ENCODE measurements at regions of chr9 and their contacts with region 1.

Region 1: GRCh38 chr9:129270903-129271431 is 92.9 kb upstream of the IER5L start:
- DNase-seq: peak; percentile 39
- H3K4me3 Mint-ChIP-seq: no peak overlapping the region
- H3K27ac Mint-ChIP-seq: no peak overlapping the region
- H3K4me1 Mint-ChIP-seq: peaks cover 22% of the 10 kb centered on the region
- H3K27me3 Mint-ChIP-seq: no peaks in the 10 kb centered on the region

Region 2: DNA sequence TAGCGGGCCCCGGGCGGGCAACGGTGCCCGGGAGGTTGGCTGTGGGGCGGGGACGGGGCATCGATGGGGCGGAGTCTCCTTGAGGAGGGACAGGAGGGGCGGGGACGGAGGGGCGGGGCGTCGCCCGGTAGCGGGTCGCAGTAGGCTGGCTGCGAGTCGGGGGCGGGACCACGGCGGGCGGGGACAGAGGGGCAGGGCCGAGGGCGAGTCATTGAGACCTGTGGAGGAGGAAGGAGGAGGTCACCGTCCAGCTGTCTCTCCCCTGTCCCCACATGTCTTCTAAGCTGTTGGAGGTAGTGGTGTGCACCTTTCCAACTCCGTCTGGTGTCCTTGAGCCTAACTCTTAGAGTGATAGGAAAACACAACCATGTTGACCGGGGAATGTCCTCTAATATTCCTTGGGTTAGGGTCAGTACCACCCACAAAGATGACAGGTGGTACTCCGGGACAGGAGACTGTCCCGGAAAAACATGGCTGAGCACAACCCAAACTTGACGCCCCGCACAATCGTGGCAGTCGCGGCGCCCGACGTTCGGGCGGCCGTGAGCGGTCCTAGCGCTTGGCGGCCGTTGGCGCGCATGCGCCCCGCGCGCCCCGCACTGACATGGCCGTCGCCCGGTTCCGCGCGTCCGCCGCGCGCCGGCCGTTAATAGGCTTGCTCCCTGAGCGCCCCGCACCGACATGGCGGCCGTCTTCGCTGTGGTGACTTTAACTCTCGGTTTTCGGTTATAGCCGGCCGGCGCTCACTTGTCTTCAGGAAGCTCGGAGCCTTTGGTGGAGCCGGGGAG is 160.0 kb before region 1 on chr9 and contains the starts of genes CRAT and PTPA:
- CTCF ChIA-PET with region 1: no interaction called
- intact Hi-C with region 1: no loop called
- DNase-seq: peak; percentile 99
- H3K4me3 Mint-ChIP-seq: peak within 1 kb of the TSS; percentile 87
- H3K27ac Mint-ChIP-seq: peak within 1 kb of the TSS; percentile 93
- H3K4me1 Mint-ChIP-seq: peaks cover 38% of the 10 kb centered on the region
- H3K27me3 Mint-ChIP-seq: no peaks in the 10 kb centered on the region
- total RNA-seq, gene CRAT: 15.0 to 15.8 TPM
- total RNA-seq, gene PTPA: 83.0 to 94.5 TPM

Region 3: DNA sequence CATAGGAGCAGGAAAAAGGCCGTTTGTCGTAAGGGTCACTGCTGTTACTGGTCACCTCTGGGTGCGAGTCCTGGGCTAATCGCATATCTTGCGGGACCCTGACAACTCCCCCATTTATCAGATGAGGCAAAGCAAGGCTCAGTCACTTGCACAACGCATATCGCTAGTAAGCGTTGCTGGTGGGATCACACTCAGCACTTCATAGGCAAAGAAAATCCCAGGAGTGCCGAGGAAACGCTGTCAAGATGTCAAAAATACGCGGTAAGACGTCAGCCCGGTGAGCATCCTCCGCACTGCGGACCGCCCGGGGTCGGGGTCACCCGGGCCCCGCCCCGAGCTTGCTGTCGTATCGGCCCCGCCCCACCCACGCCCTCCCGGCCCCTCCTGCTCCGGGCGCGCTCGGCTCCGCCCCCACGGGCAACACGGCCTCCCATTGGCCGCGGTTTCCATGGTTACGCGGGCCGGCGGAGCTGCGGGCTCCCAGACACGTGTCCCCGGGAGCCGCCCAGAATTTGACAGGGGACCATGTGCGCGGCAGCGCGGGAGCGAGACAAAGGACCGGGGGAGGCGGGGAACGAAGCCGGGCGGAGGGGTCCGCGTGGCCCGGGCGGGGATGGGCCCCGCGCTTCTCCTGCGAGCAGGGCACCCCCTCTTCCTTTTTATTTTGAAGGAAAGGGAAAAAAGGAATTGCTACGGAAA is 12.7 kb before region 1 on chr9:
- CTCF ChIA-PET with region 1: no interaction called
- intact Hi-C with region 1: loop called (anchors 1 kb)
- DNase-seq: peak; percentile 90
- H3K4me3 Mint-ChIP-seq: peak overlapping the region; percentile 57
- H3K27ac Mint-ChIP-seq: no peak overlapping the region
- H3K4me1 Mint-ChIP-seq: peaks cover 28% of the 10 kb centered on the region
- H3K27me3 Mint-ChIP-seq: peaks cover 3% of the 10 kb centered on the region

Measured in activated naive CD4-positive, alpha-beta T cell treated with anti-CD3 and anti-CD28 coated beads for 36 hours (primary cell).